CD4-positive, alpha-beta T cell (primary cell): ENCODE measurements at regions of chr19 and their contacts with region 1.

Region 1: DNA sequence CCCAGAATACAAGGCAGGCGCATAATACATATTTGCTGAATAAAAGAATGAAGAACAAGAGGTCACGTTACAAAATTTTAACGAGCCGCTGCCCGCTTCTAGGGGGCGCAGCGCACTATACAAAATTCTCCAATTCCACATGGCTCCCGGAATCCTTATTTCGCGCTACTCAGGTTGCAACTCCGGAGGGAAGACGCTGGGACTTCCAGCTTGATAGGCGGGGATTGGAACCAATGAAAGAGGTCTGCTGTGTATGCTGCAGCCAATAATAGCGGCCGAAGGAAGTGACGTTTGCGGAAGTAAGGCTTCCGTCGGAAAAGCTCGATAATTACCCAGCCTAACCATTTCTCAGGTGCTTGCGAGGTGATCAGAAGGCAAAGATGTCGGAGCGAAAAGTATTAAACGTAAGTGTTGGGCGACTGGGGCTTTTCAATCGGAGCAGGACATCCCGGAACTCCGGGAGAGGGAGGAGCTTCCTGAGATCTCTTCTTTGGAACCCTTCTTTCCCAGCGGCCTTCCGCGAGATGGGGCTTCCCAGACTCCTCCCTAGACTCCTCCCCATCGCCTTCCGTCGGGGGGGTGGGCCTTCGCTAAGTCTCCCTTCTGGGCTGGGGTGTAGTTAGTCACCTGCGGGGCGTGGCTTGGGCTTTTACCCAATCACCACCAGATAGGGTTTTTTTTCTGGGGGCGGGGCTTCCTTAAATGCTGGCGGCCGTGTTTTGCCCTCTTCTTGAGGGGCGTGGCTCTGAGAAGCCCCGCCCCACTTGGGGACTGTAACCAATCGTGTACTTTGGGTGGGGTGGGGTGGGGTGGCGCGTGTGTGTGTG is at the start of gene YJU2:
- DNase-seq: peak; percentile 96 to 100 (median 98)
- ATAC-seq: peak; percentile 94
- H3K4me3 ChIP-seq: peak within 1 kb of the TSS; percentile 73
- H3K4me3 Mint-ChIP-seq: peak within 1 kb of the TSS; percentile 93
- H3K27ac ChIP-seq: peak within 1 kb of the TSS; percentile 94 to 99
- H3K27ac Mint-ChIP-seq: peak within 1 kb of the TSS; percentile 95
- H3K4me1 ChIP-seq: peaks cover 22% of the 10 kb centered on the region
- H3K4me1 Mint-ChIP-seq: peaks cover 17% of the 10 kb centered on the region
- H3K27me3 ChIP-seq: no peaks in the 10 kb centered on the region
- H3K27me3 Mint-ChIP-seq: peaks cover 1% of the 10 kb centered on the region
- CTCF ChIP-seq: peak; percentile 58
- total RNA-seq, gene YJU2: 32.9 to 33.7 TPM

Region 2: GRCh38 chr19:4007021-4007835 is 239.8 kb before region 1 on chr19 and contains the start of gene PIAS4:
- CTCF ChIA-PET with region 1: no interaction called
- POLR2A ChIA-PET with region 1: no interaction called
- intact Hi-C with region 1: loop called in 1 of 2 experiments (anchors 1 kb)
- DNase-seq: peak; percentile 93 to 99 (median 96)
- ATAC-seq: peak; percentile 87
- H3K4me3 ChIP-seq: peak within 1 kb of the TSS; percentile 85
- H3K4me3 Mint-ChIP-seq: peak within 1 kb of the TSS; percentile 89
- H3K27ac ChIP-seq: peak within 1 kb of the TSS in 1 of 2 donors; percentile 60
- H3K27ac Mint-ChIP-seq: peak within 1 kb of the TSS; percentile 80
- H3K4me1 ChIP-seq: peaks cover 48% of the 10 kb centered on the region
- H3K4me1 Mint-ChIP-seq: peaks cover 15% of the 10 kb centered on the region
- H3K27me3 ChIP-seq: no peaks in the 10 kb centered on the region
- H3K27me3 Mint-ChIP-seq: no peaks in the 10 kb centered on the region
- CTCF ChIP-seq: peak; percentile 24
- total RNA-seq, gene PIAS4: 14.5 to 16.5 TPM

Region 3: DNA sequence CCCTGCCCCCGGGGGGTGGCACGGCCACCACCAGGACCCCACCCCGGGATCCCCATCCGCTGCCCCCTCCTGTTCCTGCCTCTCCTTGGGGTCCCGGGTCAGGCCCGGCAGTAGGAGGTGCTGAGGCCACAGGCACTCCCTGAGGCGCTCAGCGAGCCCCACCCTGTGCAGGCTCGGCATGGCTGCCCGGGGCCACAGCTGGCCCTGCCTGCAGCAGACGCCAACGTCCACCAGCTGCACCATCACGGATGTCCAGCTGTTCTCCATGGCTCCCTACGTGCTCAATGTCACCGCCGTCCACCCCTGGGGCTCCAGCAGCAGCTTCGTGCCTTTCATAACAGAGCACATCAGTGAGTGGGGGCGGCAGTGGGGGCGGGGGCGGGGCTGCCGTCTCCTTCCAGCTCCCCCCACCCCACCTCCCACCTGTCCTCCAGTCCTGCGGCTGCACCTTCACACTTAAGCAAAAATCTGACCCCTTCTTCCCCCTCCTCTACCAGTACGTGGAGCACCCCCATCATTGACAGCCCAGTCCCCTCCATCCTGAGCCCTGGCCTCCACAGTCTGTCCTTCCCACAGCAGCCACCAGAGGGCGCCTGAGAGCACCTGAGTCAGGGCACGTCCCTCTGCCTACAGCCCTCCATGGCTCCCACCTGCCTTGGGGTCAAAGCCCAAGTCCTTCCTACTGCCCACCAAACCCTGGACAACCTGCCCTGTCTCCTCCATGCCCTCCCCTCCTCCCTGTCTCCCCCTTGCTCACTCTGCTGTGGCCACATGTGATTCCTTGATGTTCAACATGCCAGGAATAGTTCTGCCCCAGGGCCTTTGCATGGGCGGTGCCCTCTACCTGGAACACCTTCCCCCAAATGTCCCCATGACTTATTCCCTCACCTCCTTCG is 13.8 kb before region 1 on chr19:
- CTCF ChIA-PET with region 1: no interaction called
- POLR2A ChIA-PET with region 1: no interaction called
- intact Hi-C with region 1: no loop called
- DNase-seq: peak; percentile 47 to 77 (median 61)
- ATAC-seq: peak; percentile 81
- H3K4me3 ChIP-seq: no peak overlapping the region
- H3K4me3 Mint-ChIP-seq: no peak overlapping the region
- H3K27ac ChIP-seq: no peak overlapping the region
- H3K27ac Mint-ChIP-seq: no peak overlapping the region
- H3K4me1 ChIP-seq: peaks cover 9% of the 10 kb centered on the region
- H3K4me1 Mint-ChIP-seq: no peaks in the 10 kb centered on the region
- H3K27me3 ChIP-seq: peaks cover 17 to 22% of the 10 kb centered on the region in 2 experiments
- H3K27me3 Mint-ChIP-seq: peaks cover 28% of the 10 kb centered on the region
- CTCF ChIP-seq: peak; percentile 33

Region 4: GRCh38 chr19:4328243-4328990 is 81.4 kb after region 1 on chr19:
- CTCF ChIA-PET with region 1: interaction called, 3 read pairs
- POLR2A ChIA-PET with region 1: interaction called, 6 read pairs
- intact Hi-C with region 1: loop called in 1 of 2 experiments (anchors 5 kb)
- DNase-seq: peak; percentile 84 to 99 (median 96)
- ATAC-seq: peak; percentile 83
- H3K4me3 ChIP-seq: peak overlapping the region; percentile 61
- H3K4me3 Mint-ChIP-seq: peak overlapping the region; percentile 90
- H3K27ac ChIP-seq: no peak overlapping the region
- H3K27ac Mint-ChIP-seq: peak overlapping the region; percentile 86
- H3K4me1 ChIP-seq: peaks cover 31% of the 10 kb centered on the region
- H3K4me1 Mint-ChIP-seq: peaks cover 25% of the 10 kb centered on the region
- H3K27me3 ChIP-seq: no peaks in the 10 kb centered on the region
- H3K27me3 Mint-ChIP-seq: no peaks in the 10 kb centered on the region
- CTCF ChIP-seq: no peak

Region 5: DNA sequence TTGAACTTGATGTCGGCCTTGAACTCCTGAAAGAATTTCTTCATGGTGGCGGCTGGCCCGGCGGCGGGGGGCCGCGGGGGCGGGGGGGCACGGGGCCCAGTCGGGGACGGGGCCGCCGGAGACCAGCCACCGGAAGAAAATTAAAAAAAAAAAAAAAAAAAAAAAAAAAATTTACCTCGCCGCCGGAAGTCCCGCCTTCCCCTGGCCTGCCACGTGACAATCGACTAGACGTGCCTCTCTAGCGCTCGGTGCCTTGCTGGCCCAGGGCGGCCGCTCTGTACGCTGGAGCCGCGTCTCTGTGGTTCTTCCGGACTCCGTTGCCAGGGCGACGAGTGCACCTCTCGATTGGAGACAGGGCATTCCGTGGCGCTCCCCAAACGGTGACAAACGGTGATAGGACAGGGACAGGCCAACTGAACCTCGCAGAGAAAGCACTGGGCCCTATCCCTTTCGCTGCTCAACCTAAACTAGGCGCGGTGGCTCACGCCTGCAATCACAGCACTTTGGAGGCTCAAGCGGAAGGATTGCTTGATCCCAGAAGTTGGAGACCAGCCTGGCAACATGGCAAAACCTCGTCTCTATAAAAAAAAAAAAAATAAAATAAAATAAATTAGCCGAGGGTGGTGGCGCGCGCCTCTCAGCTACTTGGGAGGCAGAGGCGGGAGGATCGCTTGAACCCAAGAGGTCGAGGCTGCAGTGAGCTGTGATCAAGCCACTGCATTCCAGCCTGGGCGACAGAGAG is 210.8 kb after region 1 on chr19 and contains the start of gene UBXN6:
- CTCF ChIA-PET with region 1: no interaction called
- POLR2A ChIA-PET with region 1: interaction called, 3 read pairs
- intact Hi-C with region 1: loop called in 1 of 2 experiments (anchors 2 kb)
- DNase-seq: peak; percentile 96 to 100 (median 98)
- ATAC-seq: peak; percentile 95
- H3K4me3 ChIP-seq: peak within 1 kb of the TSS; percentile 70
- H3K4me3 Mint-ChIP-seq: peak within 1 kb of the TSS; percentile 94
- H3K27ac ChIP-seq: peak within 1 kb of the TSS; percentile 49 to 68
- H3K27ac Mint-ChIP-seq: peak within 1 kb of the TSS; percentile 89
- H3K4me1 ChIP-seq: peaks cover 25% of the 10 kb centered on the region
- H3K4me1 Mint-ChIP-seq: peaks cover 16% of the 10 kb centered on the region
- H3K27me3 ChIP-seq: no peaks in the 10 kb centered on the region
- H3K27me3 Mint-ChIP-seq: no peaks in the 10 kb centered on the region
- CTCF ChIP-seq: no peak
- total RNA-seq, gene UBXN6: 54.5 to 58.4 TPM

Region 6: DNA sequence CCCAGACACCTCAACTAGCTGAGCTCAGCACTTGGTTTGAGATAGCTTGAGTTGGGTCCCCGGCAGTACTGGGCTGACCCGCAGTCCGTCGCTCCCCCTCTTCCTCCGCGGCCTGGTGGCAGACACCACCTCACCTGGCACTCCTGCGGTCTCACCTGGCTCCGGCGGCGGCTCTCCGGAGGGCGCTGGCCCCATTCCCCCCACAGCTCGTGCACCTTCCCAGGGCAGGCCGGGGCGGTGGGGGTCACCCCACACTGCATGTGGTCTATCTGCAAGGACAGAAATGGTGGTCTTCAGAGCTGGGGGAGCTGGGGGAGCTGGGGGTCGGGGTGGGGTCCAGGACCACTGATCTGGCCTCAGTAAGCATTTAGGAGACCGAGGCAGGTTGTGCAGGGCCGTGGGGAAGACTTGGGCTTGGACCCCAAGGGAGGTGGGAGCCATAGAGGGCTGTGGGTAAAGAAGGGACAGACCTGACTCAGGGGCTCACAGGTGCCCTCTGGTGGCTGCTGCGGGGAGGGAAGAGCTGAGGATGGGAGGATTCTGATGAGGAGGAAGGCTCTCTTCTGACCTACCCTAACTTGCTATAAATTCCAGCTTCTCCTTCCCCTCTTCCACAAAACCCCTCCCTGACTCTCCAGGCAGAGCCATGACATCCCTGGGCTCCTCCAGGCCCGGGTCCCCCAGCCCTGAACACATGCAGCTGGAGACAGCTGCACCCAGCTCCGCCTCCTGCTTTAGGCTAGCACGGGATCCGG is 278.0 kb after region 1 on chr19:
- CTCF ChIA-PET with region 1: interaction called, 5 read pairs
- POLR2A ChIA-PET with region 1: no interaction called
- intact Hi-C with region 1: loop called in 1 of 2 experiments (anchors 5 kb)
- DNase-seq: peak; percentile 49 to 77 (median 62)
- ATAC-seq: peak; percentile 78
- H3K4me3 ChIP-seq: no peak overlapping the region
- H3K4me3 Mint-ChIP-seq: no peak overlapping the region
- H3K27ac ChIP-seq: no peak overlapping the region
- H3K27ac Mint-ChIP-seq: no peak overlapping the region
- H3K4me1 ChIP-seq: no peaks in the 10 kb centered on the region
- H3K4me1 Mint-ChIP-seq: no peaks in the 10 kb centered on the region
- H3K27me3 ChIP-seq: no peaks in the 10 kb centered on the region
- H3K27me3 Mint-ChIP-seq: no peaks in the 10 kb centered on the region
- CTCF ChIP-seq: peak; percentile 47